ENCODE measurements at regions of chr5 and their contacts with region 1.

Region 1: DNA sequence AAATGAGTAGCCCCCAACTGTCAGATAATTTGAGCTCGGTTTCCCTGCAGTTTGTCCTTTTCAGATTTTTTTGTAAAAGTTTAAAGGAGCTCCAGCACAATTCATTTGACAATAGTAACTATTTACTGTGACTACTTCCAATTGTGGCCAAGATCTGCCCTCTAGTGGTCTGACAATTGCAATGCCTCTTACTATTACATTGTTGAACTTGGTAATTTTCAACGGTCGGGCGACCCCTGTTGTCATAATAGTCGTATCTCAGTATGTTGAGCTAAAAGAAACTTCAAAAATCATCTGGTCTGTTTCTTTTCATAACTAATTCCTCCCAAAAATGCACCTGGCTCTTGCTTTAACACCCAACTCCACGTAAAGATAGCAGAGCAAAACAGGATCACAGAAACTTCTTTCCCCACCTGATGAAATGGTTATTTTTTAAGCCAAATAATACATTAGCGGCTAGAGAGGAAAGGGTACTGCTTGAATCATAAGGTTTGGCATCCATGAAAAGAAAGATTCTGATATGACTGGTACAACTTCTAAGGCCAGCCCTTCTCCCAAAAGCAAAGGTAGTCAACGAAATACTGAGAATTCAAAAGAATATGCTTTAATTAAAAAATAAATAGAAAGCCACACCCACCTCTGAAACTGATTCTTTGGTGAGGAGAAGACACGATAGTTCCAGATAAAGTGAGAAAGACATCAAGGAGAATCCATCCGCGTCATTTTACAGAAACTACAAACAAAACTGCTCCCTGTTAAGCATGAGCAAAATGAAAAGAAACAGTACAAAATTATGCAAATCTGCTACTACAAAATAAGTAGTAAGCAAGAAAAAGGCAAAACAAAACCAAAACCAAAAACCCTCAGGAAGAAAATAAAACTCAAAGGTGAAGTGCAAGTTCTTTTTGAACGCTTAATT is 76.9 kb upstream of the HTR4 start:
- DNase-seq: peak in 5 of 6 donors; percentile 51 to 81 (median 69)
- ATAC-seq: peak; percentile 94 to 99 (median 97)
- H3K4me3 ChIP-seq: no peak overlapping the region
- H3K27ac ChIP-seq: no peak overlapping the region
- H3K4me1 ChIP-seq: no peaks in the 10 kb centered on the region
- H3K27me3 ChIP-seq: no peaks in the 10 kb centered on the region
- CTCF ChIP-seq: peak; percentile 74 to 88 (median 86)

Region 2: DNA sequence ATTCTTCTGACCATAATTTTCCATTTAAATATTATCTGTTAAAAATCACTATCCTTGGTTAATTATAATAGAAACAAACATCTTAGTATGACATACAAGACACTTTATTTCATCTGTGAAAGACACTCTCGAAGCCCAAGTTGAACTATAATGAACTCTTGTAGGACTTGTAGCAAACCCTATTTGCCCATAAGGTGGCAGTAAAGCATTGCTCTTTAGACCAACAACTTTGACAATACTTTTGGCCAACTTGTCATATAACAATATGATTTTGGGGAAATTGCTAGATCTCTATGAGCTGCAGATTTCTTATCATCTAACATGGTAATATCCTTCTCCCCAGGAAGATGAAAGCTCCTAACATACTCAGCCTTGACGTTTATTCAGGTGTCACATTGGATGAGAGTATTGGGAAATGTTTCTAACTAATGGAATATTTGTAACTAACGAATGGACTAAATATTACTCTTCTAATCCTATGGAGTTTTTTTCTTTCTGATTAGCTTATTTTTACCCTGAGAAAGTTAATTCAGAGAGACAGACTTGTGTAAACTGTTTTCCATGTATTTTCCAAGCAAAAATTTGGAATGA is 551.9 kb before region 1 on chr5:
- intact Hi-C with region 1: loop called in 1 of 3 experiments (anchors 10 kb)
- DNase-seq: no peak
- ATAC-seq: peak in 3 of 4 donors; percentile 81 to 87 (median 82)
- H3K4me3 ChIP-seq: no peak overlapping the region
- H3K27ac ChIP-seq: no peak overlapping the region
- H3K4me1 ChIP-seq: no peaks in the 10 kb centered on the region
- H3K27me3 ChIP-seq: no peaks in the 10 kb centered on the region
- CTCF ChIP-seq: peak; percentile 17 to 55 (median 46)

Region 3: DNA sequence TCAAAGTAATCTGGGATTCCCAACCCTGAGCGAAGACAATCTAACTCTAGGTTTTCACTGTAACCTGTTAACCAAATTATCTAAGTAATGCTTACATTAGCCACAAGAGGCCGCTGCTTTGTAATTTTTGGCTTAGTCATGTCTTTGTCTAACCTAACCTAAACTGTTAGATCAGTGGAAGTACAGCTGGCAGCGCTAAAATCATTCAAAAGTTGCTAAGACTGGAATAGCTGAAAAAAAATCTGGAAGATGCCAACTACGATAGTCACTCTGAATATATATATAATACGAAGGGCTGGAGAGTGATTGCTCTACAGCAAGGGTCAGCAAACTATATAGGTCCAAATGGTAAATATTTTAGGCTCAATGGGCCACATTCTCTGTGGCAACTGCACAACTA is 287.2 kb before region 1 on chr5:
- intact Hi-C with region 1: loop called (anchors 5 to 10 kb)
- DNase-seq: peak in 3 of 6 donors; percentile 33 to 56 (median 35)
- ATAC-seq: peak; percentile 92 to 96 (median 96)
- H3K4me3 ChIP-seq: no peak overlapping the region
- H3K27ac ChIP-seq: no peak overlapping the region
- H3K4me1 ChIP-seq: no peaks in the 10 kb centered on the region
- H3K27me3 ChIP-seq: no peaks in the 10 kb centered on the region
- CTCF ChIP-seq: peak; percentile 39 to 76 (median 54)

Region 4: DNA sequence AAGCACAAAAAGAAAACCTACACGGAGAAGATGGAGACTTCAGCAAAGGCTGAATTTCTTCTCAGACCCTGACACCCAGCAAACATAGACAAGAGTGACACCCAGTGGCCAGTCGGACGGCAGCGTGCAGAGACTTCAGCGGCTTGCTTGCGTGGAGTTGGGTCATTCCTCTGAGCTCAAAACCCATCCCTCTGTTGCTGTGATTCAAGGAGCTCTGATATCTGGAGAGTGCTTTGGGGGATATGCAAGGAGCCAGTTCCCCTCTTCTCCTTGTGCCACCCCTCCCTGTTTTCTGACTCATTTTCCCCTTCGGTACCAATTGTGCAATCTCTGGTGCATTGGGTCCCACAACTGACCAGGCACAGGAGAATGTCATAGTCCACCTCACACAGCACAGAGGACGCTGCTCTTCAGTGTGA is 304.2 kb after region 1 on chr5:
- intact Hi-C with region 1: loop called in 1 of 3 experiments (anchors 10 kb)
- DNase-seq: peak; percentile 40 to 84 (median 67)
- ATAC-seq: peak; percentile 69 to 97 (median 94)
- H3K4me3 ChIP-seq: no peak overlapping the region
- H3K27ac ChIP-seq: no peak overlapping the region
- H3K4me1 ChIP-seq: peaks cover 0 to 3% (median 0%) of the 10 kb centered on the region in 3 donors
- H3K27me3 ChIP-seq: no peaks in the 10 kb centered on the region
- CTCF ChIP-seq: peak; percentile 50 to 86 (median 68)

Region 5: GRCh38 chr5:149114403-149115312 is 383.5 kb after region 1 on chr5:
- intact Hi-C with region 1: loop called in 2 of 3 experiments (anchors 10 kb)
- DNase-seq: peak in 4 of 6 donors; percentile 41 to 75 (median 62)
- ATAC-seq: peak; percentile 98 to 100 (median 100)
- H3K4me3 ChIP-seq: no peak overlapping the region
- H3K27ac ChIP-seq: peak overlapping the region in 2 of 4 donors; percentile 8 to 37
- H3K4me1 ChIP-seq: peaks cover 0 to 9% (median 0%) of the 10 kb centered on the region in 3 donors
- H3K27me3 ChIP-seq: no peaks in the 10 kb centered on the region
- CTCF ChIP-seq: peak; percentile 35 to 68 (median 49)

Region 6: DNA sequence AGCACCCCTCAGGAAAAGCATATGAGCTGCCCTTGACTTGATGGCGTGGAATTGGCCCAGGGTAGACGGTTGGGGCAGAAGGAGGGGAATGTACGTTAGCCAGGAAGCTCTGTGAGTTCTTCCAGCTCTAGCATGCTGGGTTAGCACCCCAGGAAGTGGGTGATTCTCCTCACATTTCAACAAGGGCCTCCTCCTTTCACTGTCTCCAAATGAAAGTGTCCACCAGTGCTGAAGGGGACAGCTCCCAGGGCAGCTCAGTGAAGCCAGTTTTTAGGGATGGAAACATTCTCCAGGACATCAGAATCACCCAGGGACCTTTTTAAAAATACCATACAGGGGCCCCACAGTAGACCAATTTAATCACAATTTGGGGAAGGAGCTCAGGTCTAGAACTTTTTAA is 523.3 kb after region 1 on chr5:
- intact Hi-C with region 1: no loop called
- DNase-seq: no peak
- ATAC-seq: no peak
- H3K4me3 ChIP-seq: no peak overlapping the region
- H3K27ac ChIP-seq: no peak overlapping the region
- H3K4me1 ChIP-seq: no peaks in the 10 kb centered on the region
- H3K27me3 ChIP-seq: no peaks in the 10 kb centered on the region
- CTCF ChIP-seq: no peak